IMR-90 (cell line): ENCODE measurements at regions of chr7 and their contacts with region 1.

Region 1: DNA sequence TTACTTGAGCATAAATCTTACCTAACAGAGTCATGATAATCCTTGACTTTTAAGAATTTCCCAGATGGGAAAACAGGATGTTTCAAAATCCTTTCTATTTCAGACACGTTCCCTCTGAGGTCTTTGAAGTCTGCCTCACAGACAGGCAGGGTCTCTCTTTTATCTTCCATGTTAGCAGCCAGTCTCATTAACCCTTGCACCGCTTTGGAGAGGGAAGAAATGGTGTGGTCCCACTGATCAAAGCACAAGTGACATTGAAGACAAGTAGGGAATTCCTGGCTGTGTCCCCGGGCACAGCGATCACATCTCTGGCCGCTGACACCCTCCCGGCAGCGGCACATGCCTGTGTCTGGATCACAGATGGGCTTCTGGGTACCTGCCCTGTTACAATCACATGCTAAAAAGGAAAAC is 52.7 kb upstream of the LAMB1 start:
- DNase-seq: no peak
- ATAC-seq: no peak
- H3K4me3 ChIP-seq: no peak overlapping the region
- H3K27ac ChIP-seq: no peak overlapping the region
- H3K4me1 ChIP-seq: 0 out of 2 replicates have a peak, but pooled peaks cover 2% of the 10 kb centered on the region
- H3K27me3 ChIP-seq: no peaks in the 10 kb centered on the region
- CTCF ChIP-seq: no peak
- POLR2A ChIP-seq: no peak
- RAD21 ChIP-seq: no peak

Region 2: DNA sequence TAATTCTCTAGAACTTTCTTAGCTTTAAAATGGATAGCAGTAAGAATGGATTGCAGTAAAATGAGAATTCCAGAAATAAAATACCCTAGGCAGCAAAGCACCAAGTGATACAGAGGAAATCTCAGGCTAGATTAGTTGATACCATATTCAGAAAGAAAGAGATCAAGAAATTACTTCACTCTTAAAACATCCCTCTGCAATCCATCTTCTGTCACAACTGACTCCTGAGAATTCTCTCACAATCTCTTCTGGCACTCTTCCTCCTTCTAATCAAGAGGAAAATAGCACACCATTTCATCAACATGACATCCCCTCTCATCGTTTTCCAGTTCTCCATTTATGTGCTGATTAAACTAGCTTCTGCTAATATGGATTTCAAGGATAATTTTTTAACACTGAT is 10.5 kb before region 1 on chr7:
- CTCF ChIA-PET with region 1: no interaction called
- POLR2A ChIA-PET with region 1: no interaction called
- dilution Hi-C with region 1: no loop called
- in situ Hi-C with region 1: no loop called
- intact Hi-C with region 1: loop called (anchors 1 kb)
- DNase-seq: peak; percentile 67
- ATAC-seq: peak; percentile 53
- H3K4me3 ChIP-seq: no peak overlapping the region
- H3K27ac ChIP-seq: no peak overlapping the region
- H3K4me1 ChIP-seq: peaks cover 4% of the 10 kb centered on the region
- H3K27me3 ChIP-seq: no peaks in the 10 kb centered on the region
- CTCF ChIP-seq: no peak
- POLR2A ChIP-seq: no peak
- RAD21 ChIP-seq: no peak

Region 3: GRCh38 chr7:108270385-108271015 is 214.9 kb after region 1 on chr7:
- CTCF ChIA-PET with region 1: no interaction called
- POLR2A ChIA-PET with region 1: no interaction called
- dilution Hi-C with region 1: no loop called
- in situ Hi-C with region 1: no loop called
- intact Hi-C with region 1: no loop called
- DNase-seq: no peak
- ATAC-seq: no peak
- H3K4me3 ChIP-seq: no peak overlapping the region
- H3K27ac ChIP-seq: no peak overlapping the region
- H3K4me1 ChIP-seq: 0 out of 2 replicates have a peak, but pooled peaks cover 1% of the 10 kb centered on the region
- H3K27me3 ChIP-seq: no peaks in the 10 kb centered on the region
- CTCF ChIP-seq: no peak
- POLR2A ChIP-seq: no peak
- RAD21 ChIP-seq: no peak